IMR-90 (cell line): ENCODE measurements at regions of chr2 and their contacts with region 1.

Region 1: DNA sequence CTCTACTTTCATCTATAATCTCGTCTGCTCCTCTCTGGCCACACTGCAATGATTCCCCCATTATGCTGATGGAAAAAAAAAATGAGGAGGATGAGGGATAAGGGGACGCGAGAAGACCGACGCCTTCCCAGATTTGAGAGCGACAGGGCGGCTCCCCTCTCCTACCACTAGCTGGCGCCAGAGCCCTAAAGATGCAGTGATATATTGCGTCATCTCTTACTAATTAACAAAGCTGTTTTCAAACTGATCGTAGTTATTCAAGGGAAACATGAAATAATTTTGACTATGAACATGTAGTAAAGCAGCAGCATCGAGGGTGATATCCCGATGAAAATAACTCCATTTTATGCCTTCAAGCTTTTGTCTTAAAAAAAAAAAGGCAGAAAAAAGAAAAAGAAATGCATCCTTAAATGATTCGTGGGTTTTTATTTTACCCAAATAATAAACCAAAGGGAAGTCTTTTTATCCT is 48.0 kb upstream of the HNRNPA3 start:
- DNase-seq: peak; percentile 72
- ATAC-seq: peak; percentile 68
- H3K4me3 ChIP-seq: peak overlapping the region; percentile 40
- H3K27ac ChIP-seq: peak overlapping the region; percentile 34; the same call in 1 of the 2 replicates
- H3K4me1 ChIP-seq: peaks cover 9% of the 10 kb centered on the region
- H3K27me3 ChIP-seq: no peaks in the 10 kb centered on the region
- CTCF ChIP-seq: peak; percentile 99
- POLR2A ChIP-seq: peak; percentile 48; the same call in 1 of the 2 replicates
- RAD21 ChIP-seq: peak; percentile 100

Region 2: GRCh38 chr2:177212106-177212890 is 47.7 kb after region 1 on chr2 and contains the start of gene HNRNPA3:
- CTCF ChIA-PET with region 1: interaction called, 9 read pairs
- POLR2A ChIA-PET with region 1: no interaction called
- dilution Hi-C with region 1: no loop called
- in situ Hi-C with region 1: no loop called
- intact Hi-C with region 1: loop called (anchors 1 kb)
- DNase-seq: peak; percentile 99
- ATAC-seq: peak; percentile 92
- H3K4me3 ChIP-seq: peak within 1 kb of the TSS; percentile 74
- H3K27ac ChIP-seq: peak within 1 kb of the TSS; percentile 94
- H3K4me1 ChIP-seq: no peaks in the 10 kb centered on the region; the same call in none of the 2 replicates
- H3K27me3 ChIP-seq: no peaks in the 10 kb centered on the region
- CTCF ChIP-seq: no peak
- POLR2A ChIP-seq: peak; percentile 95
- RAD21 ChIP-seq: no peak
- total RNA-seq, gene HNRNPA3: 18.6 and 35.6 TPM in 2 replicates

Region 3: GRCh38 chr2:177325270-177325929 is 160.8 kb after region 1 on chr2:
- CTCF ChIA-PET with region 1: interaction called, 12 read pairs
- POLR2A ChIA-PET with region 1: no interaction called
- dilution Hi-C with region 1: no loop called
- in situ Hi-C with region 1: loop called (anchors 5 kb)
- intact Hi-C with region 1: no loop called
- DNase-seq: no peak
- ATAC-seq: peak; percentile 72
- H3K4me3 ChIP-seq: no peak overlapping the region
- H3K27ac ChIP-seq: no peak overlapping the region
- H3K4me1 ChIP-seq: peaks cover 14% of the 10 kb centered on the region
- H3K27me3 ChIP-seq: no peaks in the 10 kb centered on the region
- CTCF ChIP-seq: no peak
- POLR2A ChIP-seq: no peak
- RAD21 ChIP-seq: no peak

Region 4: GRCh38 chr2:177338177-177338721 is 173.6 kb after region 1 on chr2:
- CTCF ChIA-PET with region 1: interaction called, 22 read pairs
- POLR2A ChIA-PET with region 1: interaction called, 3 read pairs
- dilution Hi-C with region 1: no loop called
- in situ Hi-C with region 1: no loop called
- intact Hi-C with region 1: no loop called
- DNase-seq: peak; percentile 68
- ATAC-seq: peak; percentile 62
- H3K4me3 ChIP-seq: no peak overlapping the region
- H3K27ac ChIP-seq: no peak overlapping the region
- H3K4me1 ChIP-seq: peaks cover 11% of the 10 kb centered on the region
- H3K27me3 ChIP-seq: no peaks in the 10 kb centered on the region
- CTCF ChIP-seq: no peak
- POLR2A ChIP-seq: no peak
- RAD21 ChIP-seq: no peak

Region 5: DNA sequence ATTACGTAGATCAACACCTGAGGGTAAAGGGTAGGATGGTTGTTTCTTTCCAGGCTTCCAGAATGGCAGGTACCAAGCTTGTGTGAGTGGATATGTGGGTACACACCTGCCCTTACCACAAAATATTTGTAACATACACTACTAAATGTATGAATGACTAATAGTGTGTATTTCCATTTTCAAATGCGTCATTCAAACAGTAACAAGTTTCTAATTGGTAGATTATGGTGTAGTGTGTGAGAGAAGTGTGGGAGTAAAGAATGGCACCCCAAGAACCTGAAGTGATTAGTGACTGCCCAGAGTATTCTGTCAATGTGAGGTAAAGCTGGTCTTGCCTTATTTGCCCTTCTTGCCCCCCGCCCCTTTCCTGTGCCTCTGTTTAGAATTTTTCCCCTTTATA is 249.1 kb after region 1 on chr2:
- CTCF ChIA-PET with region 1: interaction called, 7 read pairs
- POLR2A ChIA-PET with region 1: no interaction called
- dilution Hi-C with region 1: no loop called
- in situ Hi-C with region 1: loop called (anchors 5 kb)
- intact Hi-C with region 1: loop called (anchors 1 kb)
- DNase-seq: no peak
- ATAC-seq: no peak
- H3K4me3 ChIP-seq: no peak overlapping the region
- H3K27ac ChIP-seq: no peak overlapping the region
- H3K4me1 ChIP-seq: no peaks in the 10 kb centered on the region
- H3K27me3 ChIP-seq: no peaks in the 10 kb centered on the region
- CTCF ChIP-seq: no peak
- POLR2A ChIP-seq: no peak
- RAD21 ChIP-seq: no peak

Region 6: DNA sequence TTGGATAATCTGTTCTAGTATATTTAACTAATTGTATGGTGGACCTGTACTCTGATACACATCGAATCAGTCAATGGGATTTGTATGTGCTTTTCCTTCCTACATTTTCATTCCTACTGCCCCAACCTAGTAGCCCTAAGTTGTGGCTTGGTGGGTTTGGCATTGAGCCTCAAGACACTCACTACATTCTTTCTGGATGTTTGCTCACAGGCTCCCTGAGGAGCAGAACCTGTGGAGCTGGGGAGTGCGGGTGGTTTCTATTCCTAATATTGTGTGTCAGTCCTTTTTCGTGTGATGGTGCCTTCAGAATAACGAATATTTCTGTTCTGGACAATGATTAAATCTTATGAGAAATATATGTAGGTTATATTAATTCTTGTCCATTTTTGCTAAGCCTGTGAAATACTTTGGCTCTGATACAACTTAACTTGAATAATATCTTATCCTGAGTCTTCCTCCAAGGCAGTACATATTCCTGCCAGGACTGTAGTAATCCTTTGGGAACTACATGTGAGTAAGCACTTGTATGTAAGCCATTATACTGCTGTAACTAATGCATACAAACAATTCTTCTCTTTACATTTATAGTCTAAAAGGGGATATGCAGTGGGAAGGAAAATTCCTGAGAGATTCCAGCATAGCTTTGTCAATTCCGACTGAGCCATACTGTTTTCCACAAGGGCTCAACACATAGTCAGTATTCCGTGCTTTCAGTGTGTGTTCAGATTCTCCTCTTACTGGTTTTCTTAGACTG is 378.6 kb after region 1 on chr2:
- CTCF ChIA-PET with region 1: no interaction called
- POLR2A ChIA-PET with region 1: no interaction called
- dilution Hi-C with region 1: no loop called
- in situ Hi-C with region 1: no loop called
- intact Hi-C with region 1: loop called (anchors 5 kb)
- DNase-seq: peak; percentile 81
- ATAC-seq: peak; percentile 94
- H3K4me3 ChIP-seq: no peak overlapping the region
- H3K27ac ChIP-seq: no peak overlapping the region
- H3K4me1 ChIP-seq: no peaks in the 10 kb centered on the region
- H3K27me3 ChIP-seq: no peaks in the 10 kb centered on the region
- CTCF ChIP-seq: no peak
- POLR2A ChIP-seq: no peak
- RAD21 ChIP-seq: no peak

Region 7: GRCh38 chr2:177724398-177725287 is 560.0 kb after region 1 on chr2:
- CTCF ChIA-PET with region 1: interaction called, 5 read pairs
- POLR2A ChIA-PET with region 1: no interaction called
- dilution Hi-C with region 1: no loop called
- in situ Hi-C with region 1: no loop called
- intact Hi-C with region 1: loop called (anchors 1 kb)
- DNase-seq: peak; percentile 42
- ATAC-seq: peak; percentile 85
- H3K4me3 ChIP-seq: no peak overlapping the region
- H3K27ac ChIP-seq: no peak overlapping the region
- H3K4me1 ChIP-seq: no peaks in the 10 kb centered on the region
- H3K27me3 ChIP-seq: peaks cover 8% of the 10 kb centered on the region
- CTCF ChIP-seq: peak; percentile 82
- POLR2A ChIP-seq: no peak
- RAD21 ChIP-seq: peak; percentile 87